GM12878 (cell line): ENCODE measurements at regions of chr22 and their contacts with region 1.

Region 1: GRCh38 chr22:45268958-45269844 is 15.5 kb upstream of the UPK3A start:
- DNase-seq: no peak
- ATAC-seq: peak; percentile 95
- H3K4me3 ChIP-seq: peak overlapping the region; percentile 72
- H3K27ac ChIP-seq: no peak overlapping the region
- H3K4me1 ChIP-seq: peaks cover 9% of the 10 kb centered on the region
- H3K27me3 ChIP-seq: peaks cover 3 to 4% of the 10 kb centered on the region in 2 experiments; a peak in 3 of 4 replicates
- CTCF ChIP-seq: peak; percentile 75 to 88 (median 82); a peak in 5 of 6 replicates
- EP300 ChIP-seq: no peak
- POLR2A ChIP-seq: no peak
- RAD21 ChIP-seq: peak; percentile 95

Region 2: DNA sequence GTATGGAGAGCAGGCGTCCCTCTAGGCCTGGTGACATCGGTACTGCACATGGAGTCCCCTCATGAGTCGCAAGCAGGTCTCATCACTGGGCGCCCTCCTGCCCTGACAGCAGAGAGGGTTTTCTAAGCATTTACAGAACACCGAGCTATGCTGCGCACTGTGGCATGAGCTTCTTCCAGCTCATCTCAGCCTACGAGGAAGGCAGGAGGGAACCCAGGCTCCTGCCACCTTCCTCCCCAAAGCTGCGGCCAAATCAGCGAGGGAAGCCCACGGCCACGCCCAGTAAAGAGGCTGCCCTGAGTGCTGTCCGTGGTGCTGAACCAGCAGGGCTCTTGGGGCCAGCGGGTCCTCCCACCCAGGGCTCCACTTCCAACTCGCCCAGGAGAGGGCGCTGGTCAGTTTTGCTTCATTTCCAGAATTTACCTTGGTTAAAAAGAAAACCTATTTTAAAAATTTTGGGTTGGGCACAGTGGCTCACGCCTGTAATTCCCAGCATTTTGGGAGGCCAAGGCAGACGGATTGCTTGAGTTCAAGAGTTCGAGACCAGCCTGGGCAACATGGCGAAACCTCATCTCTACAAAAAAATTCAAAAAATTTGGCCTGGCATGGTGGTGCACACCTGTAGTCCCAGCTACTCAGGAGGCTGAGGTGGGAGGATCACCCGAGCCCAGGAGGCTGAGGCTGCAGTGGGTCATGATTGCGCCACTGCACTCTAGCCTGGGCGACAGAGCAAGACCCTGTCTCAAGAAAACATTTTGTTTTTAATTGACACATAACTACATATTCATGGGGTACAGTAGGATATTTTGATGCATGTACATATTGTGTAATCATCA is 293.6 kb before region 1 on chr22:
- CTCF ChIA-PET with region 1: no interaction called
- POLR2A ChIA-PET with region 1: no interaction called
- RAD21 ChIA-PET with region 1: no interaction called
- SMC1A ChIA-PET with region 1: no interaction called
- in situ Hi-C with region 1: no loop called
- intact Hi-C with region 1: loop called (anchors 10 kb)
- DNase-seq: no peak
- ATAC-seq: peak; percentile 93
- H3K4me3 ChIP-seq: no peak overlapping the region
- H3K27ac ChIP-seq: no peak overlapping the region
- H3K4me1 ChIP-seq: no peaks in the 10 kb centered on the region; the same call in 1 of the 2 replicates
- H3K27me3 ChIP-seq: peaks cover 5 to 6% of the 10 kb centered on the region in 2 experiments; a peak in 3 of 4 replicates
- CTCF ChIP-seq: peak; percentile 70 to 80 (median 76)
- EP300 ChIP-seq: no peak
- POLR2A ChIP-seq: no peak
- RAD21 ChIP-seq: peak; percentile 64

Region 3: GRCh38 chr22:45429981-45430775 is 161.0 kb after region 1 on chr22:
- CTCF ChIA-PET with region 1: interaction called, 7 read pairs
- POLR2A ChIA-PET with region 1: interaction called, 14 read pairs
- RAD21 ChIA-PET with region 1: interaction called, 5 read pairs
- SMC1A ChIA-PET with region 1: interaction called, 4 read pairs
- in situ Hi-C with region 1: loop called (anchors 5 kb)
- intact Hi-C with region 1: loop called (anchors 1 kb)
- DNase-seq: no peak
- ATAC-seq: no peak
- H3K4me3 ChIP-seq: no peak overlapping the region
- H3K27ac ChIP-seq: no peak overlapping the region
- H3K4me1 ChIP-seq: no peaks in the 10 kb centered on the region
- H3K27me3 ChIP-seq: no peaks in the 10 kb centered on the region; a peak in 1 of 4 replicates
- CTCF ChIP-seq: no peak
- EP300 ChIP-seq: no peak
- POLR2A ChIP-seq: no peak
- RAD21 ChIP-seq: no peak

Region 4: GRCh38 chr22:45435544-45436139 is 166.4 kb after region 1 on chr22:
- CTCF ChIA-PET with region 1: interaction called, 9 read pairs
- POLR2A ChIA-PET with region 1: interaction called, 14 read pairs
- RAD21 ChIA-PET with region 1: interaction called, 5 read pairs
- SMC1A ChIA-PET with region 1: interaction called, 4 read pairs
- in situ Hi-C with region 1: loop called (anchors 5 kb)
- intact Hi-C with region 1: loop called (anchors 1 kb)
- DNase-seq: peak; percentile 35
- ATAC-seq: peak; percentile 98
- H3K4me3 ChIP-seq: no peak overlapping the region
- H3K27ac ChIP-seq: no peak overlapping the region
- H3K4me1 ChIP-seq: no peaks in the 10 kb centered on the region; the same call in 1 of the 2 replicates
- H3K27me3 ChIP-seq: no peaks in the 10 kb centered on the region
- CTCF ChIP-seq: peak; percentile 89 to 94 (median 93)
- EP300 ChIP-seq: no peak
- POLR2A ChIP-seq: no peak
- RAD21 ChIP-seq: peak; percentile 76

Region 5: DNA sequence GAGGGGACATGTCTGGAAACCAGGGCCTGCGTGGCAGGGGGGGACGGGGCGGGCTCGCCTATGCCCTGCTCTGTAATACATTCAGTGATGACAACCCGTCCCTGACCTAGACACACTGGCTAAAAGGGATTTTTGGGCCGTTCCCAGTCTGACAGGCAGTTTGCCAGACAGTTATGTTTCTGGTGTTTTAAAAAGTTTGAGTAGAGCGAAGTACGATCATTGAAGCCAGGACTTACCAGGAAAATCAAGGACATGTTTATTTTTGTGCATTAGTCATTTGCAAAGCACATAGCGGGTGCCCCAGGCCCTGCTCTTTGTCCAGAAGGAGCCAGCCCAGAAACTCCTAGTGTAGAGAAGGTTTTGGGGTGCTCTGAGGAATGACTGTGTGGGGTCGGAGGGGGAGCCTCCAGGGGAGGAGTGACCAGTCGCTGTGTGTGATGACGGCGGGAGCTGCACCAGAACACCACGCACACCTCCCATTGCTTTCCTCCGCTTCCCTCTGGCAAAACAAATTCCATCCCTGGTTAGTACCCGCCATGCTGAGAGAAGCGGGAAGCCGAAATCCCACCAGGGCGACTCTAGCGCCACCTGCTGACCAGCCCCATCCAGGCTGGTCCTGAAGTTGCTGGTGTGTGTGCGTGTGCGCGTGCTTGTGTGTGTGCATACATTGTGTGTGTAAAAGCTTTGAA is 284.3 kb after region 1 on chr22:
- CTCF ChIA-PET with region 1: interaction called, 6 read pairs
- POLR2A ChIA-PET with region 1: no interaction called
- RAD21 ChIA-PET with region 1: no interaction called
- SMC1A ChIA-PET with region 1: no interaction called
- in situ Hi-C with region 1: loop called (anchors 5 kb)
- intact Hi-C with region 1: loop called (anchors 5 kb)
- DNase-seq: no peak
- ATAC-seq: peak; percentile 59; the same call in 2 of the 3 replicates
- H3K4me3 ChIP-seq: no peak overlapping the region
- H3K27ac ChIP-seq: no peak overlapping the region
- H3K4me1 ChIP-seq: no peaks in the 10 kb centered on the region
- H3K27me3 ChIP-seq: no peaks in the 10 kb centered on the region
- CTCF ChIP-seq: peak; percentile 77 to 85 (median 84)
- EP300 ChIP-seq: no peak
- POLR2A ChIP-seq: no peak
- RAD21 ChIP-seq: peak; percentile 60